Activated B cell treated with CpG ODN at 0.5 μM for 24 hours (primary cell): ENCODE measurements at regions of chr3 and their contacts with region 1.

Region 1: DNA sequence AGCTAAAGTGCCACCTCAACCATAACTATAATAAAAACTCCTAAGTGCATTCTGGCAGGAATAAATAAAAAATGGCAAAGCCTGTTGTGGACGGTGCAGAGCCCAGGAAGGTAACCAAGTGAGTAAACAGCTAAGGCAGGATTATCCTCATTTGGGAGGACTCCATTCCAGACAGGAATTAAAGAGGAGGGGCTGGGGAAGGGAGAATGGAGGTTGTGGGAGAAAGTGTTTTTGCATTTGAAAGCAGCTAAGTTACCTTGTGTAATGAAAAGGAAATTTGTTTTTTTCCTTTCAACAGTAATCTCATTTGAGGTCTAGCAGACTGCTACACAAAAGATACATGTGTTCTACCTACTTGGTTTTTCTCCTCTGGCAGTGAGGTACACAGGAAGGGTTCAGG is 248.5 kb downstream of the TIGIT start:
- DNase-seq: no peak
- ATAC-seq: no peak
- H3K4me3 Mint-ChIP-seq: no peak overlapping the region
- H3K27ac Mint-ChIP-seq: no peak overlapping the region
- H3K4me1 Mint-ChIP-seq: peaks cover 16% of the 10 kb centered on the region
- H3K27me3 Mint-ChIP-seq: no peaks in the 10 kb centered on the region
- CTCF ChIP-seq: no peak

Region 2: DNA sequence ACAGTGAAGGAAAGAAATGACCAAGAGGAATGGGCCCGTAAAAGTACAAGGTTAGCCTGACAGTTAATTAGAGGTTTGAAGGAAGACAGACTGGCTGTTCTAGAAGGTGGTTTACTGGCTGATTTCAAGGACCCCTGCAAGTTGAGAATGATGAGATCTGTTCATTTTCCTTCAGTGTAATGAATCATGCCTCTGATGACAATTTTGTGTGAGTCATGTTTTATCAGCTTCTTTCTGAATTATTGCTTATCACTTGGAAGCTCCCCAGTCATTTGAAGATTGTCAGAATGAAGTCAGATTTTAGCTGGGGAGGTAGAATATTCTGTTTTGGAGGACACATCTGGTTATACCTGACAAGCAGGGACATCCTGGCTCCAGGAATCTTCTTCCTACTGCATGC is 414.1 kb before region 1 on chr3:
- CTCF ChIA-PET with region 1: no interaction called
- POLR2A ChIA-PET with region 1: no interaction called
- intact Hi-C with region 1: no loop called
- DNase-seq: no peak
- ATAC-seq: no peak
- H3K4me3 Mint-ChIP-seq: no peak overlapping the region
- H3K27ac Mint-ChIP-seq: no peak overlapping the region
- H3K4me1 Mint-ChIP-seq: no peaks in the 10 kb centered on the region
- H3K27me3 Mint-ChIP-seq: no peaks in the 10 kb centered on the region
- CTCF ChIP-seq: no peak

Region 3: DNA sequence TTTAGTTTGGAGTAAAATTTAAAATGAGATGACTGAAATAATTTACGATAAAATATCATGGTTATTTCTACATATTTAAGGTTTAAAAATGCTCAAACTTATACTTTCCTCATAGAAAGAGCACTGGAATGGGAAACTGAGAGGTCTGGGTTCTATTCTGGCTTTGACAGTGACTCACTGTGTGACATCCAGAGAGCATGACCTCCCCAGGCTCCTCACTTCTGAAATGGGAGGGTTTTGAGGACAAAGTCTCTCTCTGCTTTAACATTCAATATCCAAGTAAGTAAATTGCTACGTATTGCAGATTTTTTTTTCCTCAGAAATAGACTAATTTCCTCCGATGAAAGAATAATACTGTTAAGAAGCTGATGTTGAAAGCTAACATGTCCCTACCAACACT is 13.8 kb before region 1 on chr3:
- CTCF ChIA-PET with region 1: interaction called, 3 read pairs
- POLR2A ChIA-PET with region 1: no interaction called
- intact Hi-C with region 1: loop called (anchors 2 kb)
- DNase-seq: no peak
- ATAC-seq: no peak
- H3K4me3 Mint-ChIP-seq: no peak overlapping the region
- H3K27ac Mint-ChIP-seq: no peak overlapping the region
- H3K4me1 Mint-ChIP-seq: peaks cover 4% of the 10 kb centered on the region
- H3K27me3 Mint-ChIP-seq: no peaks in the 10 kb centered on the region
- CTCF ChIP-seq: no peak

Region 4: DNA sequence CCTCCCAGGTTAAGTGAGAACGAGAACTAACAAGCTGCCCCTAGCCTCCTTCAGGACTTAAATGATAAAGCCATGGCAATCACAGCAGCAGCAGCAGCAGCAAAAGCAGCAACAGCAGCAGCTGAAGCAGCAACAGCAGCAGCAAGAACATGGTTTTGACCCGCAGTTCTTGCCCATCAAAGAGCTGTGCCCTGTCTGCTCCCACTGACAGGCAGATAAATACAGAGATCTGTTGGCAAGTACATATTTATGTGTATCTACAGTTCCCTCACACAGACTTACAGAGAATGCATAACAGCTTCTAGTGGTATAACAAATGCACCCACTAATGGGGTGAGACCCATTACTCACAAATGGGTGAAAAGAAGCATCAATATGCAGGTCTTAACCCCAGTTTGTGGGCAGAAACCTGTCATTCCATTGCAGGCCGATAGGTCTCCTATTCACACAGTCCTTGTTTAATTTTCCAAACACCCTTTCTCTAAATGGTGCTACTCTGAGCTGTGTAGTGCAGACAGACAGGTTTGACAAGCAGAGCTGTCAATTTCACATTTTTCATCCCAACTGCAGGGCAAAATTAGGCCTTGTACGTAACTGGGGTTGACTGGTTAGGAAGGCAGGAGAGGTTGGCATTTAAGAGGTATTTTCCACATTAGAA is 67.7 kb after region 1 on chr3:
- CTCF ChIA-PET with region 1: no interaction called
- POLR2A ChIA-PET with region 1: no interaction called
- intact Hi-C with region 1: no loop called
- DNase-seq: no peak
- ATAC-seq: no peak
- H3K4me3 Mint-ChIP-seq: no peak overlapping the region
- H3K27ac Mint-ChIP-seq: no peak overlapping the region
- H3K4me1 Mint-ChIP-seq: no peaks in the 10 kb centered on the region
- H3K27me3 Mint-ChIP-seq: no peaks in the 10 kb centered on the region
- CTCF ChIP-seq: no peak